Common myeloid progenitor, CD34-positive (primary cell): ENCODE measurements at regions of chr14 and their contacts with region 1.

Region 1: DNA sequence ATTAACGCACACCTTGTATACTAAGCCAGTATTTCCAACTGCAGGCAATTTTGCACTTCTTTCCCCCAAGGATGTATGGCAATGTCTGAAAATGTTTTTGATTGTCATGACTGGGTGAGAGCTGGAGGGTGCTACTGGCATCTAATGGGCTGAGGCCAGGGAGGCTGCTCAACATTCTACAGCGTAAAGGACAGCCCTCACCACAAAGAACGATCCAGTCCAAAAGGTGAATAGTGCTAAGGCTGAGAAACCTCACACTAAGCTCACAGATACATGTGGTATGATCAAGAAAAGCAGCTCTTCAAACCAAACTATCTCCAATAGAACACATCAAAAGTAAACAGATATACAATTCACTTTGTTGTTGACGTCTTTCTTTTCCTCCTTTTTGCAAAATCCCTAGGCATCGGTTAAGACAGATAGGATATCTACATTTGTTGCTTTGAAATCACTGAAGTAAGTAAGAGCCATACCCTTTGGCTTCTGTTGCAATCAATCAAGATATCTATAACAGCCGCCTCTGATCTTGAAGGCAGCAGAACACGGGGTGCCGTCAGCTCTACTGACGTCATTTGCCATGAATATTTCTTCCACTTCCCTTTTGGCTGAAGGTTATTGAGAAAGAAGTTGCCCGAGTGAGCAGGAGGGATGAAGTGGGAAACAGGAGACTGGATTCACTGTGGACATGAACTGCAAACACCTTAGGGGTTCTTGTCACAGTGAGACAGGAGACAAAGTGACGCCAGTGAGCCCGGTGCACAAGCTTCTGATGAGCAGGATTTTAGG is 218.3 kb downstream of the FOXN3 start:
- DNase-seq: no peak
- H3K4me3 ChIP-seq: no peak overlapping the region
- H3K27ac ChIP-seq: no peak overlapping the region
- H3K4me1 ChIP-seq: peaks cover 0 to 25% (median 19%) of the 10 kb centered on the region in 4 experiments
- H3K27me3 ChIP-seq: no peaks in the 10 kb centered on the region

Region 2: GRCh38 chr14:89093083-89093730 is 105.5 kb before region 1 on chr14:
- CTCF ChIA-PET with region 1: no interaction called
- POLR2A ChIA-PET with region 1: no interaction called
- DNase-seq: no peak
- H3K4me3 ChIP-seq: no peak overlapping the region
- H3K27ac ChIP-seq: no peak overlapping the region
- H3K4me1 ChIP-seq: no peaks in the 10 kb centered on the region
- H3K27me3 ChIP-seq: no peaks in the 10 kb centered on the region

Region 3: GRCh38 chr14:89214221-89214936 is 15.6 kb after region 1 on chr14:
- CTCF ChIA-PET with region 1: interaction called, 24 read pairs
- POLR2A ChIA-PET with region 1: no interaction called
- DNase-seq: peak in 2 of 3 donors; percentile 40 to 52
- H3K4me3 ChIP-seq: peak overlapping the region in 1 of 7 experiments; percentile 10
- H3K27ac ChIP-seq: peak overlapping the region in 1 of 2 experiments; percentile 43
- H3K4me1 ChIP-seq: peaks cover 2 to 48% (median 17%) of the 10 kb centered on the region in 4 experiments
- H3K27me3 ChIP-seq: no peaks in the 10 kb centered on the region

Region 4: DNA sequence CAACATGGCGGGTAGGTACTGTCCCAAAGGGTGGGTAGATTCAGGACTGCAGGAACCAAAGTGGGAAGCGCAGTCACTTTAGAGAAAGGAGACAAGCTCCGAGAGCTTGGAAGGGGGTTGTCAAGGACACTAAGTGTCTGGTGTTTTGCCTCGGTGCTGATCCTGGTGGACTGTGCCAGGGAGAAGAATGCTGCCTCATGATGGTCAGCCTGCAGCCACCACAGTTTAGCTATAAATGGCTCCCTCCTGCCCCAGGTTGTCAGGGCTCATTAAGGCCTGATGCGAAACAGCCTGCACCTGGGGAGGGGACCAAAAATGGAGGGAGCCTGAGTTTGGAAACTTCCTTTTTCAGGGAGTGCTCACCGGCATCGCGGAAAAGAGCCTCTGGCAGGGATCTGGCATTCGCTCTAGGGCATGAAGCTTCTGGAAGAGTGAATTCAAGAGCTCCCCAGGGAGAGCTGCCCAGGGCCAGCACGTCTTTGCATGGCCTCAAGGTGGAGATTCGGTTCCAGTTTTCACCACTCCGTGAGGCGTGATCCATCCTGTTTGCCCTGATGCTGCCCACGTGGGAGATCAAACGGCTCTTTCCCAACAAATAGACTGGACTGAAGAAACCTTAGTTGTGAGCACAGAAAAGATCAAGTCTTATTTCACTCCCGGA is 54.3 kb after region 1 on chr14:
- CTCF ChIA-PET with region 1: no interaction called
- POLR2A ChIA-PET with region 1: no interaction called
- DNase-seq: peak in 2 of 3 donors; percentile 16 to 27
- H3K4me3 ChIP-seq: no peak overlapping the region
- H3K27ac ChIP-seq: no peak overlapping the region
- H3K4me1 ChIP-seq: no peaks in the 10 kb centered on the region
- H3K27me3 ChIP-seq: no peaks in the 10 kb centered on the region